ENCODE measurements at regions of chr10 and their contacts with region 1.

Region 1: DNA sequence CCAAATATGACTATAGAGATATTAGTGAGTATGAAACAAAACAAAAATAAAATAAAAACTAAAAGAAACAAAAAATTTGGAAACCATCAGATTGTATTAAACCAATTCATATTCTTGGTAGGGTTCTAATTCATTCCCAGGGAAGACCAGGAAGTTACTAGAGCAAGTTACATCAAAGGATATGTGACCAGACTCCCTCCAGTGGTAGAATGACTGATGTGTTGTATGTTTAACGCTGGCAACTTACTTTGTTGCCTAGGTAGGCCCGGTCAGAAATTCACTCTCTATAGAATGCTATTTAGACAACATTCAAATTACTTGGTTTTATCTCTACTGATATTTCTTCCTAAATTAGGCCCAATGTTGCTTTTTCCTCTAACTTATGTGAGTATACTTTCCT is 5.2 kb downstream of the PHYHIPL start:
- DNase-seq: peak in 1 of 10 donors; percentile 18
- H3K4me3 ChIP-seq: peak overlapping the region in 56 of 59 donors; percentile 6 to 93 (median 76)
- H3K27ac ChIP-seq: peak overlapping the region in 53 of 59 donors; percentile 1 to 98 (median 71)
- H3K27me3 ChIP-seq: no peaks in the 10 kb centered on the region
- CTCF ChIP-seq: peak; percentile 23 to 85 (median 69)

Region 2: GRCh38 chr10:58909881-58910280 is 271.8 kb before region 1 on chr10:
- intact Hi-C with region 1: no loop called
- DNase-seq: no peak
- H3K4me3 ChIP-seq: no peak overlapping the region
- H3K27ac ChIP-seq: no peak overlapping the region
- H3K27me3 ChIP-seq: no peaks in the 10 kb centered on the region
- CTCF ChIP-seq: no peak

Region 3: DNA sequence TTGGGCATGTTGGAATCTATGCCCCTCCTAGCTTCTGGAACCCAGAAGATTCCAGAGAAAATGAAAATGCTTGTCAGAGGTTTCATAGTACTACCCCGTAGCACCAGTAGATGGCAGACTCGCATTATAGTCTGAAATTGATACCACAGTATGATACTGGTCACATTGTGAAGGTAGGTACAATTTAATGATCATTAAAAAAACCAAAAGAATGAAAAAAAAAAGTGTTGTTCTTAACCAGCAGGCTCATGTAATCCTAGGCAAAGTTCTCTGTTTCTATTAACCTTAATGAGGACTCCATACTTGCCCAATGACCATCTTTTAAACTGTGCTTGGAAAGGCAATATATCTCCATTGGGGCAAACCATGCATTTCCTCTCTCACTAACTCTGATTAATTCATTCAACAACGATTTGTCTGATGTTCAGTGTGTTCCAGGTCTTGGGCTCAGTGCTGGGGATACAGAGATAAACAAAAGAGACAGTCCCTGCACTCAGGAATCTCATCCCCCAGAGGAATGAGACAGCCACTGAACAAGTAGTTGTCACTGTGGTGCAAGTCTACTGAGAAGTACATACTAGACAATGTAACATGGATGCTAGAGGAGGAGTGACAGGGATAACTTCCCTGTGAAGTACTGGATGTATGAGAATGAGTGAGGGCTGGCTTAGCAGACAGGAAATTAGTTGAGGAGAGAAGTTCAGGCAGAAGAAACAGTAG is 228.8 kb before region 1 on chr10:
- intact Hi-C with region 1: loop called (anchors 2 kb)
- DNase-seq: peak in 4 of 10 donors; percentile 36 to 83 (median 50)
- H3K4me3 ChIP-seq: no peak overlapping the region
- H3K27ac ChIP-seq: peak overlapping the region in 57 of 59 donors; percentile 10 to 91 (median 74)
- H3K27me3 ChIP-seq: no peaks in the 10 kb centered on the region
- CTCF ChIP-seq: peak; percentile 70 to 97 (median 87)

Region 4: GRCh38 chr10:58998924-58999713 is 182.5 kb before region 1 on chr10:
- intact Hi-C with region 1: loop called (anchors 2 to 5 kb)
- DNase-seq: peak; percentile 62 to 94 (median 86)
- H3K4me3 ChIP-seq: peak overlapping the region; percentile 3 to 74 (median 57)
- H3K27ac ChIP-seq: peak overlapping the region; percentile 83 to 100 (median 98)
- H3K27me3 ChIP-seq: no peaks in the 10 kb centered on the region
- CTCF ChIP-seq: peak in 9 of 56 donors; percentile 4 to 24 (median 12)

Region 5: GRCh38 chr10:59098387-59098786 is 83.3 kb before region 1 on chr10:
- intact Hi-C with region 1: loop called in 1 of 2 experiments (anchors 10 kb)
- DNase-seq: no peak
- H3K4me3 ChIP-seq: no peak overlapping the region
- H3K27ac ChIP-seq: peak overlapping the region in 47 of 59 donors; percentile 17 to 95 (median 72)
- H3K27me3 ChIP-seq: no peaks in the 10 kb centered on the region
- CTCF ChIP-seq: no peak

Region 6: DNA sequence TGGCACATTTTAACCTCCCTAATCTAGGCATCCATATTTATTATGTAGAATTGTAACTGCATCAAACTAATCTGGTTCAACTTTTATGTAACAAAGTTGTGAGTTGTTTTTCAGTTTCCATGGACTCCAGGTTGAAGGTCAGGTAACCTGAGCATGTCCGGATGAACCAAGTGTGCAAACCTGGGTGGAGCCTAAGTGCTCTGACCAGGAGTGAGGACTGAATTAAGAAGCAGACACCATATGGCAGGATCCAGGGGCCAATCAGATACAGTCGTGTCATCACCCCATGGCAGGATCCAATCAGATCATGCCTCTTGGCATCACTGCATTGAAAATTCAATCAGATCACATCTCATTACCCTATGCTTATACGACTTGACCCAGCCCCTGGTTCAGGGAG is 46.4 kb before region 1 on chr10:
- intact Hi-C with region 1: no loop called
- DNase-seq: no peak
- H3K4me3 ChIP-seq: no peak overlapping the region
- H3K27ac ChIP-seq: no peak overlapping the region
- H3K27me3 ChIP-seq: no peaks in the 10 kb centered on the region
- CTCF ChIP-seq: no peak

Region 7: GRCh38 chr10:59227136-59227673 is 45.5 kb after region 1 on chr10:
- intact Hi-C with region 1: loop called in 1 of 2 experiments (anchors 5 kb)
- DNase-seq: peak in 1 of 10 donors; percentile 16
- H3K4me3 ChIP-seq: no peak overlapping the region
- H3K27ac ChIP-seq: peak overlapping the region in 39 of 59 donors; percentile 1 to 73 (median 25)
- H3K27me3 ChIP-seq: no peaks in the 10 kb centered on the region
- CTCF ChIP-seq: peak in 30 of 56 donors; percentile 11 to 53 (median 31)

Region 8: DNA sequence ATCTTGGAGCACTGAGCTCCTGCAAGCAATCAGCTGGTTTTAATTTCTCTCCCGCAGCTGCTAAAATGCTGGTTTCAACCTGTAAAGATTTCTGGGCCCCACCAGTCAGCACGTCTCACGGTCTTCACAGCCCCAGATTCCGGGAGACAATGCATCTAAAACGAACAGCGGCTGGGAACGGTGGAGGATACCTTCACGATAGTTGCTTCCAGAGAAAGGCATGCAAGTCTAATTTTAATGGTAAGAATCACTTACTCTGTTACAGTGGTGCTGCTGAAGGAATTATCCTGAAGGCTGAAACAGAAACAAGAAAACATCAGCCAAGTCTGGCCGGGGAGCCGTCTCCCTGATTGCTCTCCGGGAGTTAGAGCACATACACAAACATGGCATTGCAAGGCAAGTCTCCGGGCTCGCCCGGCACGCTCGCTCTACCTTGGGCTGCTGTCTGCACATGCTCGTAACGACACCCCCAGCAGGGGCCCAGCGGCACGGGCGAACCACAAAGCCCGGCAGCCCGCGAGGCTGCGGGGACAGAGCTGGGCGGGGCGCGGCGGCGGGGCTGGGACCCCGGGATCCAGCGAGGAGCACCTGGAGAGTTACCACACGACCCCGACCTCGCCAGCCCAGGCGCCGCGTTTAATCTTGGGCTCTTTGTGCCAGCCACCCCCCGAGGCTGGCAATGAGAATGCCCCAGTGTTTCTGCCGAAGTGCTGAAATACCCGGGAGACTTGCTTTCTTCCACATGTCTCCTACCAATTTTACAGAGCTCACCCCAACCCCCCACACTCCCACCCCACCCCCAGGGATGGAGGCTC is 180.7 kb after region 1 on chr10 and contains the start of gene FAM13C:
- intact Hi-C with region 1: loop called in 1 of 2 experiments (anchors 5 kb)
- DNase-seq: peak; percentile 71 to 87 (median 83)
- H3K4me3 ChIP-seq: peak within 1 kb of the TSS; percentile 48 to 87 (median 74)
- H3K27ac ChIP-seq: peak within 1 kb of the TSS; percentile 92 to 99 (median 98)
- H3K27me3 ChIP-seq: no peaks in the 10 kb centered on the region
- CTCF ChIP-seq: peak in 14 of 56 donors; percentile 6 to 38 (median 14)
- total RNA-seq, gene FAM13C: 54.6 to 219 (median 93.7) TPM

Measured in dorsolateral prefrontal cortex (tissue), 120 donors.